BJ (cell line): ENCODE measurements at regions of chr5 and their contacts with region 1.

Region 1: GRCh38 chr5:142012792-142013388 is at the start of gene GNPDA1:
- DNase-seq: no peak
- H3K4me3 ChIP-seq: peak within 1 kb of the TSS; percentile 68
- H3K27me3 ChIP-seq: peaks cover under 1% of the 10 kb centered on the region; the same call in 1 of the 2 replicates
- CTCF ChIP-seq: no peak
- polyA plus RNA-seq, gene GNPDA1: 12.5 TPM in 2 replicates

Region 2: GRCh38 chr5:141933151-141933550 is 79.7 kb before region 1 on chr5:
- CTCF ChIA-PET with region 1: no interaction called
- POLR2A ChIA-PET with region 1: no interaction called
- DNase-seq: no peak
- H3K4me3 ChIP-seq: no peak overlapping the region
- H3K27me3 ChIP-seq: no peaks in the 10 kb centered on the region
- CTCF ChIP-seq: no peak

Region 3: GRCh38 chr5:141992349-141992963 is 20.4 kb before region 1 on chr5:
- CTCF ChIA-PET with region 1: interaction called, 50 read pairs
- POLR2A ChIA-PET with region 1: interaction called, 21 read pairs
- DNase-seq: no peak
- H3K4me3 ChIP-seq: no peak overlapping the region
- H3K27me3 ChIP-seq: no peaks in the 10 kb centered on the region
- CTCF ChIP-seq: peak; percentile 72

Region 4: DNA sequence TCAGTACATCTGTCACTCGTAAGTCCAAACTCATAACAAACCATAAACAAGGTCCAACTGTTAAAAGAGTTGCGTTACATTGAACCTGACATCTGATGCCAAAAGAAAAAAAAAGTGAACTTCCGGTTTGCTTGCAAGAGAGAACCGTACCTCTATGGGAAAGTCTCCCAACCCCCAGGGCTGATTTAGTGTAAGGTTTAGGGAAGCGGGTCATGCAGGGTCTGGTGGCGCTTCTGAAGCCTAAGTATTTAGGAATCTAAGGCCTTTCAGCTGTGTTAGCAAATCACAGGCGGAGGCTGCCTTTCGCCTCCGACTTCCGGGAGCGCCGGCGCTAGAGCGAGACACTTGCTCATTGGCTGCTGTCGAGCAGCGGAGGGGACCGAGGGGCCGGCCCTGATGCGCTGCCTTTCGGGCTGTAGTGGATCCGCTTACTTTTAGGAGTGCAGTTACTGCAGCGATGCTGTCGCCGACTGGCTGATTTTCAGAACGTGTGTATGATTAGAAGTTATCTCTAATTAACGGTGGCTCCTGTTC is 11.9 kb after region 1 on chr5:
- CTCF ChIA-PET with region 1: interaction called, 11 read pairs
- POLR2A ChIA-PET with region 1: no interaction called
- DNase-seq: peak; percentile 49
- H3K4me3 ChIP-seq: peak overlapping the region; percentile 41
- H3K27me3 ChIP-seq: no peaks in the 10 kb centered on the region
- CTCF ChIP-seq: no peak

Region 5: DNA sequence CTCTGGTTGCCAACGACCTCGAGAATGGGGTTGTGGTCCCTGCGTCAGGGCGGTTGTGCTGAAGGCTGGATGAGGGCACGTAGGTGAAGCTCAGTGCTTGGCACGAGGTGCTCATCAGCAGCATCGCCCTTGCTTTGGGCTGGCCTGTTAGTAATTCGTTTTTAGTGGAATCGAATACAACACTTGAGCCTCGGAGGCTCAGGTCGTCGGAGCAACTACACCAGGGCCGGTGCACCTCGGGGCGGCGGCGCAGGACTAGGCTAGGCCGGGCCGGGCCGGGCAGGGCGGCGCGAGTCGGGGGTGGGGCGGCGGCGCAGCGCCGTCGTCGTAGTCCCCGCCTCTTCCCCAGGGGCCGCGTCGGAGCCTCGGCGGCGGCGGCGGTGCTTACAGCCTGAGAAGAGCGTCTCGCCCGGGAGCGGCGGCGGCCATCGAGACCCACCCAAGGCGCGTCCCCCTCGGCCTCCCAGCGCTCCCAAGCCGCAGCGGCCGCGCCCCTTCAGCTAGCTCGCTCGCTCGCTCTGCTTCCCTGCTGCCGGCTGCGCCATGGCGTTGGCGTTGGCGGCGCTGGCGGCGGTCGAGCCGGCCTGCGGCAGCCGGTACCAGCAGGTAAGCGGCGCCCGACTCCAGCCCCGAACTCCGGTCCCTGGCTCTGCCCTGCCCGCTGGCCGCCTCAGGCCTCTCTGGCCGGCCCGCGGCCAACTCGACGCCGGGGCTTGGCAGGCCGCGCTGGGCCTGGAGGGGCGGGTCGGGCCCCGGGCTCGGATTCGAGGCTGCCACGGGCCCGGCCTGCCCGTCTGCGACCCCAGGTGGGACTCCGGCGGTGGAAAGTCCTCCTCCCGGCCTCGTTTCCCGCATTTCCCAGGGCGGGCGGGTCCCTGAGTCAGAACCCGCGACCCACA is 95.8 kb after region 1 on chr5 and contains the start of gene NDFIP1:
- CTCF ChIA-PET with region 1: interaction called, 10 read pairs
- POLR2A ChIA-PET with region 1: no interaction called
- DNase-seq: no peak
- H3K4me3 ChIP-seq: peak within 1 kb of the TSS; percentile 76
- H3K27me3 ChIP-seq: no peaks in the 10 kb centered on the region
- CTCF ChIP-seq: no peak
- polyA plus RNA-seq, gene NDFIP1: 11.2 and 22.4 TPM in 2 replicates

Region 6: GRCh38 chr5:142412581-142412980 is 399.7 kb after region 1 on chr5:
- CTCF ChIA-PET with region 1: no interaction called
- POLR2A ChIA-PET with region 1: no interaction called
- DNase-seq: no peak
- H3K4me3 ChIP-seq: no peak overlapping the region
- H3K27me3 ChIP-seq: no peaks in the 10 kb centered on the region
- CTCF ChIP-seq: no peak